MCF 10A (cell line): ENCODE measurements at regions of chr1 and their contacts with region 1.

Region 1: GRCh38 chr1:27556781-27557595 is 47.0 kb downstream of the AHDC1 start:
- DNase-seq: peak; percentile 97
- H3K4me3 Mint-ChIP-seq: peak overlapping the region; percentile 44
- H3K27ac Mint-ChIP-seq: peak overlapping the region; percentile 44
- H3K4me1 Mint-ChIP-seq: peaks cover 36% of the 10 kb centered on the region
- H3K27me3 Mint-ChIP-seq: no peaks in the 10 kb centered on the region
- CTCF ChIP-seq: peak; percentile 96

Region 2: DNA sequence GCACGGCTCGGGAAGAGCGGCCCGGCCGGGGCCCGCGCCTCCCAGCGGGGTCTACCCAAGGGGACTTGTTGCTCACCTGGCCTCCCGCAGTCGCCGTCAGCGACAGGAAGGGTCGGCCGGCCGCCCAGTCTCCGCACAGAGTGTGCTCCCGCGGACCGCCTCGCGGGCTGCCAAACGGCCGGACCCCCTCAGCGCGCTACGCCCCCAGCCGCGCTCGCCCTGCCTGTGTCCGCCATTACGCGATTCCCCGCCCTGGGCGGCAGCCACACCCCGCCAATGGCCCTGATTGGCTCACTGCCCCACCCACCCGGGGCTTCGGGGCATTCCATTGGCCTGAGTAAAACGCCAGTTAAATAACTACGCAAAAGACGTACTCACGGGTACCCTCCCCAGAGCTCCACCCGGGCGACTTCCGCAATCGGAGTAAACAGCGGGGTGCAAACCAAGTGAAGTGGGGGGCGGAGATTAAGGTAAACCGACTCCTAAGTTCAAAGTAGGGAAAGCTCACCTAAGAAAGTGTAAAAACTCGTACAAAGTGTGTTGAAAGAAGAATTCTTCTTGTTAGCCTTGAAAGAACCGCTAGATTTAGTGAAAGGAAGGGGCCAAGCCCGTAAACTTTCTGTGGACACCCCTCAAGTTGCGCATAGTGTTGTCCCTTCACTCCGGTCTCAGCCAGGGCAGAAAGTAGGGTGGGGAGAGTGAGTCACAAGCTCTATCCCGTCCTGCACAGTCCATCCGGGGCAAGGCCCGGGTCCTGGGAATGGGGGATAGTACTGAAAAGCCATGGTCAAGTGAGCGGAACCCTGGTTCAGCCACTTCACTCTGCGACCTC is 66.9 kb before region 1 on chr1 and contains the start of gene WASF2:
- CTCF ChIA-PET with region 1: interaction called, 3 read pairs
- POLR2A ChIA-PET with region 1: interaction called, 17 read pairs
- intact Hi-C with region 1: loop called (anchors 5 kb)
- DNase-seq: peak; percentile 96
- H3K4me3 Mint-ChIP-seq: peak within 1 kb of the TSS; percentile 85
- H3K27ac Mint-ChIP-seq: peak within 1 kb of the TSS; percentile 100
- H3K4me1 Mint-ChIP-seq: peaks cover 14% of the 10 kb centered on the region
- H3K27me3 Mint-ChIP-seq: no peaks in the 10 kb centered on the region
- CTCF ChIP-seq: no peak
- total RNA-seq, gene WASF2: 131 and 154 TPM in 2 replicates

Region 3: GRCh38 chr1:27525296-27526272 is 31.4 kb before region 1 on chr1:
- CTCF ChIA-PET with region 1: interaction called, 6 read pairs
- POLR2A ChIA-PET with region 1: interaction called, 10 read pairs
- intact Hi-C with region 1: loop called (anchors 2 kb)
- DNase-seq: no peak
- H3K4me3 Mint-ChIP-seq: peak overlapping the region; percentile 22
- H3K27ac Mint-ChIP-seq: peak overlapping the region; percentile 22
- H3K4me1 Mint-ChIP-seq: peaks cover 71% of the 10 kb centered on the region
- H3K27me3 Mint-ChIP-seq: no peaks in the 10 kb centered on the region
- CTCF ChIP-seq: no peak

Region 4: DNA sequence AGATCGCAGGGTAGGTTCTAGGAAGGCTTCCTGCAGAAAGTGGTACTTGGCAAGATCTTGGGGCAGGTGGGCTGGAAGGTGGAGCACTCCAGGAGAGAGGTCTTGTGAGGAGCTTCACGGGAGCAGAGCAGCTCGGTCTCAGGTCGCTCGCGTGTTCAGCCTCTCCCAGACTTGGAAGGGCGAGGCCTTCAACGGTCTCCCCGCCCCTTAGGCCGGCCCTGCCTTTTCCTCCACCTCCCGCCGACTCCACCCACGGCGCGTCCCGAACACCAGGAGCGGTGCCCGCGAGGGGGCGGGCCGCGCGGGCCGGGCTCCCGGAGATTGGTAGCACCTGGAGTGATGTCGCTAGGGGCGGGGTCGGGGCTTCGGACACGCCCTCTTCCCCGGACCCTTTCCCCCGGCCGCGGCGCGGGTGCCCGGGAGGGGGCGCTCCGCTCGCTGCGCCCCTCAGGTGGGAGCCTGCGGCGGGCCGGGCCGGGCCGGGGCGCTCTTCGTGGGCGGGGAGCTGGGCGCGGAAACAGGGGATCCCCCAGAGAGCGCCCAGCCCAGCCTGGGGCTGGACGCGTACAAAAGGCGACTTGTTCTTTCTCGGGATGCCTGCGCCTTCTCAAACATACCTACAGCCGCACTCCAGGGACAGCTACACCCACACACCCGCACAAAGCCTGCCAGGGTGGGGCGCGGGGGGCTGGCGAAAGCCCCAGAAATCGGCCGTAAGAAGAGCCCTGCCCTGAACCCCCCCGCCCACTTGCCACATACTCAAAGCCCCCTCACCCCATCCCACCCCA is 11.5 kb after region 1 on chr1:
- CTCF ChIA-PET with region 1: interaction called, 53 read pairs
- POLR2A ChIA-PET with region 1: interaction called, 53 read pairs
- intact Hi-C with region 1: no loop called
- DNase-seq: peak; percentile 97
- H3K4me3 Mint-ChIP-seq: peak overlapping the region; percentile 61
- H3K27ac Mint-ChIP-seq: peak overlapping the region; percentile 22
- H3K4me1 Mint-ChIP-seq: peaks cover 43% of the 10 kb centered on the region
- H3K27me3 Mint-ChIP-seq: no peaks in the 10 kb centered on the region
- CTCF ChIP-seq: peak; percentile 64

Region 5: DNA sequence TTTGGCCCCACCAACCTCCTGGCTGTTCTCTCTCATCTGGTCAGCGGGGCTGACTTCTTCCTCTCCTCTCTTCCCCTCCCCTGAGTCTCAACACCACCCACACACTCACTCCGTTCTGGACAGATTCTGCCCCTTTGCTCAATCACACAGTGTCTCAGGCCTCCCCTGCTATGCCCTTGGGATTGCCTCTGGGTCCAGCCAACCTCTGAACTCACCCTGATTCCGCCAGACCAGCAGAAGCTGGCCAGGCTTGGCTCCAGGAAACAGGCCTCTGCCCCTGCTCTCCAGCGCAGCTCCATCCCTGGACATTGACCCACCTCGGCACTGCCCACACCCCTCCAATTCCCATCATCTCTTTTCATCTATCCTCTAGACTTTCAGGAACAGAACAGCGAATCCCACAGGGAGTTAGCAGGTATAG is 24.8 kb after region 1 on chr1:
- CTCF ChIA-PET with region 1: interaction called, 28 read pairs
- POLR2A ChIA-PET with region 1: no interaction called
- intact Hi-C with region 1: no loop called
- DNase-seq: no peak
- H3K4me3 Mint-ChIP-seq: no peak overlapping the region
- H3K27ac Mint-ChIP-seq: no peak overlapping the region
- H3K4me1 Mint-ChIP-seq: peaks cover 24% of the 10 kb centered on the region
- H3K27me3 Mint-ChIP-seq: no peaks in the 10 kb centered on the region
- CTCF ChIP-seq: no peak

Region 6: GRCh38 chr1:27662707-27663393 is 105.9 kb after region 1 on chr1:
- CTCF ChIA-PET with region 1: interaction called, 7 read pairs
- POLR2A ChIA-PET with region 1: interaction called, 5 read pairs
- intact Hi-C with region 1: loop called (anchors 5 kb)
- DNase-seq: peak; percentile 86
- H3K4me3 Mint-ChIP-seq: no peak overlapping the region
- H3K27ac Mint-ChIP-seq: peak overlapping the region; percentile 81
- H3K4me1 Mint-ChIP-seq: peaks cover 29% of the 10 kb centered on the region
- H3K27me3 Mint-ChIP-seq: no peaks in the 10 kb centered on the region
- CTCF ChIP-seq: peak; percentile 69